ENCODE measurements at regions of chr7 and their contacts with region 1.

Region 1: GRCh38 chr7:27640914-27641580 is 21.6 kb downstream of the HIBADH start:
- DNase-seq: peak; percentile 90
- H3K4me3 Mint-ChIP-seq: peak overlapping the region; percentile 67
- H3K27ac Mint-ChIP-seq: peak overlapping the region; percentile 82
- H3K4me1 Mint-ChIP-seq: peaks cover 51% of the 10 kb centered on the region
- H3K27me3 Mint-ChIP-seq: no peaks in the 10 kb centered on the region
- CTCF ChIP-seq: no peak

Region 2: GRCh38 chr7:27611043-27611442 is 30.0 kb before region 1 on chr7:
- CTCF ChIA-PET with region 1: interaction called, 7 read pairs
- POLR2A ChIA-PET with region 1: interaction called, 17 read pairs
- intact Hi-C with region 1: loop called (anchors 2 kb)
- DNase-seq: peak; percentile 80
- H3K4me3 Mint-ChIP-seq: no peak overlapping the region
- H3K27ac Mint-ChIP-seq: no peak overlapping the region
- H3K4me1 Mint-ChIP-seq: peaks cover 26% of the 10 kb centered on the region
- H3K27me3 Mint-ChIP-seq: no peaks in the 10 kb centered on the region
- CTCF ChIP-seq: no peak

Region 3: GRCh38 chr7:27619492-27619891 is 21.6 kb before region 1 on chr7:
- CTCF ChIA-PET with region 1: no interaction called
- POLR2A ChIA-PET with region 1: interaction called, 11 read pairs
- intact Hi-C with region 1: no loop called
- DNase-seq: no peak
- H3K4me3 Mint-ChIP-seq: no peak overlapping the region
- H3K27ac Mint-ChIP-seq: no peak overlapping the region
- H3K4me1 Mint-ChIP-seq: peaks cover 6% of the 10 kb centered on the region
- H3K27me3 Mint-ChIP-seq: no peaks in the 10 kb centered on the region
- CTCF ChIP-seq: no peak

Region 4: GRCh38 chr7:27745064-27745583 is 104.1 kb after region 1 on chr7:
- CTCF ChIA-PET with region 1: interaction called, 3 read pairs
- POLR2A ChIA-PET with region 1: interaction called, 94 read pairs
- intact Hi-C with region 1: no loop called
- DNase-seq: peak; percentile 62
- H3K4me3 Mint-ChIP-seq: no peak overlapping the region
- H3K27ac Mint-ChIP-seq: peak overlapping the region; percentile 77
- H3K4me1 Mint-ChIP-seq: peaks cover 32% of the 10 kb centered on the region
- H3K27me3 Mint-ChIP-seq: no peaks in the 10 kb centered on the region
- CTCF ChIP-seq: peak; percentile 63

Measured in MCF 10A (cell line).